ENCODE measurements at regions of chr3 and their contacts with region 1.

Region 1: GRCh38 chr3:13895155-13896105 is 15.6 kb upstream of the WNT7A start:
- DNase-seq: peak; percentile 17
- H3K4me3 ChIP-seq: peak overlapping the region; percentile 61
- CTCF ChIP-seq: no peak

Region 2: GRCh38 chr3:13884851-13885703 is 10.4 kb before region 1 on chr3:
- CTCF ChIA-PET with region 1: interaction called, 10 read pairs
- POLR2A ChIA-PET with region 1: no interaction called
- DNase-seq: no peak
- H3K4me3 ChIP-seq: no peak overlapping the region
- CTCF ChIP-seq: peak; percentile 21

Region 3: GRCh38 chr3:14113965-14114635 is 218.7 kb after region 1 on chr3:
- CTCF ChIA-PET with region 1: interaction called, 62 read pairs
- POLR2A ChIA-PET with region 1: no interaction called
- DNase-seq: no peak
- H3K4me3 ChIP-seq: no peak overlapping the region
- CTCF ChIP-seq: no peak

Region 4: GRCh38 chr3:14124615-14125190 is 229.3 kb after region 1 on chr3 and contains the starts of genes CHCHD4 and TMEM43:
- CTCF ChIA-PET with region 1: interaction called, 18 read pairs
- POLR2A ChIA-PET with region 1: no interaction called
- DNase-seq: peak; percentile 96
- H3K4me3 ChIP-seq: peak within 1 kb of the TSS; percentile 100
- CTCF ChIP-seq: no peak

Region 5: GRCh38 chr3:14170531-14171173 is 275.2 kb after region 1 on chr3:
- CTCF ChIA-PET with region 1: interaction called, 10 read pairs
- POLR2A ChIA-PET with region 1: no interaction called
- DNase-seq: peak; percentile 42
- H3K4me3 ChIP-seq: no peak overlapping the region
- CTCF ChIP-seq: no peak

Region 6: GRCh38 chr3:14178247-14179113 is 283.1 kb after region 1 on chr3 and contains the starts of genes LSM3 and XPC:
- CTCF ChIA-PET with region 1: interaction called, 10 read pairs
- POLR2A ChIA-PET with region 1: interaction called, 3 read pairs
- DNase-seq: peak; percentile 97
- H3K4me3 ChIP-seq: peak within 1 kb of the TSS; percentile 95
- CTCF ChIP-seq: no peak

Region 7: DNA sequence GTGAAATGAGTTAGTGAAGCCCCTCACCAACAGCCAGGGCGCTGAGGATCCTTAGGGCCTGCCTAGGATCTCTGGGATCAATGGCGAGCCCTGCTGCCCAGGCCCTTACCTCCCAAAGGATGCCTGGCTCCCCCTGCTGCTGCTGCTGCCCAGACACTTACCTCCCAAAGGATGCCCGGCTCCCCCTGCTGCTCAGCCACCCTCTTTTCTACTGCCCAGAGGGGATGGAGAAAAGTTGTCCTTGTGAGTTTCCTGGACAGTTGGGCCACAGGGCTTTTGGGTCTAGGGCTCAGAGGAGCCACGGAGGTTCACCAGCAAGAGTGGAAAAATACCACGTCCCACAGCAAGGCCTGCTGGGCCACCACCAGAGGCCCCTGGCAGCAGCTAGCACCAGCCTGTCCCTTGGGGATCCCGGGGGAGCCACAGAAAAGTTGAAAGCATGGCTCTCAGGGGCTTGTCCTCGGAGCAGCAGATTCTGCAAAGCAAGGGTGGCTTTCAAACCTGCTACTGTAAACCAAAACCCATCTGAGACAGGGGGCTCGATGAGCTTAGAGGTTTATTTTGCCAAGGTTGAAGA is 566.4 kb after region 1 on chr3:
- CTCF ChIA-PET with region 1: interaction called, 12 read pairs
- POLR2A ChIA-PET with region 1: no interaction called
- DNase-seq: no peak
- H3K4me3 ChIP-seq: no peak overlapping the region
- CTCF ChIP-seq: peak; percentile 91

Region 8: GRCh38 chr3:15159501-15160136 is 1264.2 kb after region 1 on chr3:
- CTCF ChIA-PET with region 1: no interaction called
- POLR2A ChIA-PET with region 1: no interaction called
- DNase-seq: no peak
- H3K4me3 ChIP-seq: no peak overlapping the region
- CTCF ChIP-seq: no peak

Measured in AG04449 (cell line).